ENCODE measurements at regions of chr6 and their contacts with region 1.

Region 1: DNA sequence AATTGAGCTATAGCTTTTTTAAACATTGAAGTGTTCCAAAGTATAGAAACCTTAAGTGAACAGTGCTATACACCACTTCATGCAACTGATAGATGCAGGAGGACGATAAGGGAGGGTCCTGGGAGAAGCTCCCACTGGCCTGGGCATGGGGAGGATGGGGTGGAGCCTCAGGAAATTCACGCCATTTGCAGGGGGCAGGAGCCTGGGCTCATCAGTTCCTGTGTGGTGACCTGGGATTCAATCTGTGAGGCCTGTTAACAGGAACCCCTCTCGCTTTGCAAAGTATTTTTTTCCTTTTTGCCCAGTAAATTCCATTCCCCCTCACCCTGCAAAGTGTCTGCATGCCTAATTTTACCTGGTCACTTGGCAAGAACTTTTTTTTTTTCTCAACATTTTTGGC is 11.0 kb upstream of the ASCC3 start:
- DNase-seq: no peak
- H3K4me3 ChIP-seq: no peak overlapping the region
- H3K4me3 Mint-ChIP-seq: no peak overlapping the region
- H3K27ac Mint-ChIP-seq: no peak overlapping the region
- H3K4me1 ChIP-seq: peaks cover 22% of the 10 kb centered on the region
- H3K4me1 Mint-ChIP-seq: no peaks in the 10 kb centered on the region
- H3K27me3 ChIP-seq: no peaks in the 10 kb centered on the region
- H3K27me3 Mint-ChIP-seq: no peaks in the 10 kb centered on the region
- CTCF ChIP-seq: no peak

Region 2: DNA sequence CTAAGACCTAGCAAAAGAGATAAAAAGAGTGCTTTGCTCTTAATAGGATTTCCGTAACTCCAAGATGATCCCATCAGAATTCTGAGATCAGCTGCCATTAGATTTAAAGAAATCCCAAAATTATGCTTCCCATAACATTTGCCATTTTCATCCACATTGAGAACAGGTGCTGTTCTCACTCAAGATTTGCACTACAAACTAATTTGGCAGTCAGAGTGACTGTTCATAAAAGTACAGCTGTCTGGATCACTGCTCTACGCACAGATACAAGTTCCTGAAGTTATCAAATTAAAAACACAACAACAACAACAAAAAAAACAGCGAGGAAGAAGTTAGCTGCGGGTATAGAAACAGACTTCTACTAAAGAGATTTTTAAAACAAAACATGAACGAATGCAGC is 69.1 kb before region 1 on chr6:
- CTCF ChIA-PET with region 1: no interaction called
- POLR2A ChIA-PET with region 1: no interaction called
- intact Hi-C with region 1: no loop called
- DNase-seq: no peak
- H3K4me3 ChIP-seq: no peak overlapping the region
- H3K4me3 Mint-ChIP-seq: no peak overlapping the region
- H3K27ac Mint-ChIP-seq: no peak overlapping the region
- H3K4me1 ChIP-seq: no peaks in the 10 kb centered on the region
- H3K4me1 Mint-ChIP-seq: no peaks in the 10 kb centered on the region
- H3K27me3 ChIP-seq: no peaks in the 10 kb centered on the region
- H3K27me3 Mint-ChIP-seq: no peaks in the 10 kb centered on the region
- CTCF ChIP-seq: no peak

Region 3: GRCh38 chr6:100905067-100905466 is 13.0 kb after region 1 on chr6:
- CTCF ChIA-PET with region 1: no interaction called
- POLR2A ChIA-PET with region 1: no interaction called
- intact Hi-C with region 1: loop called (anchors 2 kb)
- DNase-seq: no peak
- H3K4me3 ChIP-seq: no peak overlapping the region
- H3K4me3 Mint-ChIP-seq: no peak overlapping the region
- H3K27ac Mint-ChIP-seq: peak overlapping the region; percentile 55
- H3K4me1 ChIP-seq: peaks cover 34% of the 10 kb centered on the region
- H3K4me1 Mint-ChIP-seq: peaks cover 37% of the 10 kb centered on the region
- H3K27me3 ChIP-seq: no peaks in the 10 kb centered on the region
- H3K27me3 Mint-ChIP-seq: no peaks in the 10 kb centered on the region
- CTCF ChIP-seq: no peak

Region 4: DNA sequence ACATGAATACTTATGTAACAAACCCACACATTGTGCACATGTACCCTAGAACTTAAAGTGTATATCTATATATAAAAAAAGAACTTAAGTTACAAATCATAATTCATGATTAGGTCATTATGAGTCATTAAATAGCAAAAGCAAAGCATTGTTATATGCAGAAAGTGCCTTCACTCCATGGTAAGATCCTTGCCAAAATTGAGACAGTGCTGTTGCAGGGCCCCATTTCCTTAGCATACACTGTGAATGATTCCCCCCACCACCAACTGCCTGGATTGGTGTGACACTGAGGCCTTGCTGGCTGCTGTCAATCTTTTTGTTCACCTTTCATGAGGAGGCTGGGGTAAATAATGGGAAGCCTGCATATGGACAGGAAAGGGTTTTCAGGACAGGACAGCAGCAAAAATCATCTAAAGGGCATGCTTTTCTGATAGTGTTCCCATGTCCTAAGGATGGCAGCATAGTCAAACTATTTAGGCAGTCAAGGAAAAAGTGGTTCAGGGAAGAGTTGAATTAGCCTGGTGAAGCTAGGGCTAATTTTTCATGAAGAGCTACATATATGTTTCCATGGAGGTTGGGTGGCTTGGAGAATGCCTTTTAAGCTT is 177.2 kb after region 1 on chr6:
- CTCF ChIA-PET with region 1: no interaction called
- POLR2A ChIA-PET with region 1: no interaction called
- intact Hi-C with region 1: no loop called
- DNase-seq: no peak
- H3K4me3 ChIP-seq: no peak overlapping the region
- H3K4me3 Mint-ChIP-seq: no peak overlapping the region
- H3K27ac Mint-ChIP-seq: no peak overlapping the region
- H3K4me1 ChIP-seq: no peaks in the 10 kb centered on the region
- H3K4me1 Mint-ChIP-seq: no peaks in the 10 kb centered on the region
- H3K27me3 ChIP-seq: no peaks in the 10 kb centered on the region
- H3K27me3 Mint-ChIP-seq: peaks cover 4% of the 10 kb centered on the region
- CTCF ChIP-seq: no peak

Measured in Caco-2 (cell line).